Vagina (tissue), 2 donors: ENCODE measurements at regions of chr16 and their contacts with region 1.

Region 1: DNA sequence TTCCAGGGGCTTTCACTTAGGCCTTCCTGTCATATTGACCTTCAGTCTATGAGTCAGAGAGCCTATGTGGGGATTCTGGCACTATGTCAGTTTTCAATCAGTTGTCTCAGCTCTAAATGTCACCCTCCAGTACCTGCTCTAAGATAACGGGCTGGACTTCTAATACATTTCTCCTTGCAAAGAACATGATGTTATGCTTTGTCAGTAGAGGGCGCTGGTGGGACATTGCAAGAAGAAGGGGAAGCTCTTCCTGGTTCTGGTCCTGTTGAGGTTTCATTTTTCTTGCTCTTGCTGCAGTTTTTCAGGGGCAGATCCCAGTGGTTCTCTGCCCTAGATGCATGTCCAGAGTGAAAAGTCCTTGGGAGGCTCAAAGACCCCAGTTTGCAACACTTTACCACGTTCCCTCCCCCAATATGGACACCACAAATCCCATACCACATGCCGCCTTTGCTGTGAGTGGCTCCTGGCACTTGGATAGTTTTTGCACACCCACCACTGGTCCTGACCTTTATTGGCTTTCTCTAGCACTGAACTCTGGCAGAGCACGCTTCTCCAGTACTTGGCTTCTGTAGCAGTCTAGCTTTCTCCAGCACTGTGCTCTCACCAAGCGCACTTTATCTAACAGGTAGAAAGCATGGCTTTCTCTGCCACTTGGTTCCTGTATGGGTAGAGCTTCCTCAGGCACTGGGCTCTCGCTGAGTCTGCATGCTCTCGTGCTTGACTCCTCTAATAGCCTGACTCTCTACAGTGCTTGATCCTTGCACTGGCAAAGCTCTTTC is 49.0 kb downstream of the BCL7C start:
- DNase-seq: no peak
- H3K4me3 ChIP-seq: peak overlapping the region; percentile 23 to 31
- H3K27ac ChIP-seq: peak overlapping the region; percentile 69
- H3K4me1 ChIP-seq: peaks cover 11% of the 10 kb centered on the region
- H3K27me3 ChIP-seq: no peaks in the 10 kb centered on the region
- CTCF ChIP-seq: peak; percentile 63 to 88 (median 70)
- POLR2A ChIP-seq: no peak

Region 2: DNA sequence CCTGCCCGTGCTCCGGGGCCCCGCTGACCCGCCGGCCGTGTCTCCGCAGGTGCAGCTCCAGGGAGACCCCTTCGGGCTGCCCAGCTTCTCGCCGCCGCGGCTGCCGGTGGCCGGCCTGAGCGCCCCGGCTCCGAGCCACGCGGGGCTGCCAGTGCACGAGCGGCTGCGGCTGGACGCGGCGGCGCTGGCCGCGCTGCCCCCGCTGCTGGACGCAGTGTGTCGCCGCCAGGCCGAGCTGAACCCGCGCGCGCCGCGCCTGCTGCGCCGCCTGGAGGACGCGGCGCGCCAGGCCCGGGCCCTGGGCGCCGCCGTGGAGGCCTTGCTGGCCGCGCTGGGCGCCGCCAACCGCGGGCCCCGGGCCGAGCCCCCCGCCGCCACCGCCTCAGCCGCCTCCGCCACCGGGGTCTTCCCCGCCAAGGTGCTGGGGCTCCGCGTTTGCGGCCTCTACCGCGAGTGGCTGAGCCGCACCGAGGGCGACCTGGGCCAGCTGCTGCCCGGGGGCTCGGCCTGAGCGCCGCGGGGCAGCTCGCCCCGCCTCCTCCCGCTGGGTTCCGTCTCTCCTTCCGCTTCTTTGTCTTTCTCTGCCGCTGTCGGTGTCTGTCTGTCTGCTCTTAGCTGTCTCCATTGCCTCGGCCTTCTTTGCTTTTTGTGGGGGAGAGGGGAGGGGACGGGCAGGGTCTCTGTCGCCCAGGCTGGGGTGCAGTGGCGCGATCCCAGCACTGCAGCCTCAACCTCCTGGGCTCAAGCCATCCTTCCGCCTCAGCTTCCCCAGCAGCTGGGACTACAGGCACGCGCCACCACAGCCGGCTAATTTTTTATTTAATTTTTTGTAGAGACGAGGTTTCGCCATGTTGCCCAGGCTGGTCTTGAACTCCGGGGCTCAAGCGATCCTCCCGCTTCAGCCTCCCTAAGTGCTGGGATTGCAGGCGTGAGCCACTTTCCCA is 57.4 kb after region 1 on chr16:
- intact Hi-C with region 1: loop called (anchors 5 kb)
- DNase-seq: no peak
- H3K4me3 ChIP-seq: peak overlapping the region; percentile 54 to 55
- H3K27ac ChIP-seq: peak overlapping the region; percentile 91
- H3K4me1 ChIP-seq: peaks cover 34% of the 10 kb centered on the region
- H3K27me3 ChIP-seq: no peaks in the 10 kb centered on the region
- CTCF ChIP-seq: no peak
- POLR2A ChIP-seq: no peak

Region 3: DNA sequence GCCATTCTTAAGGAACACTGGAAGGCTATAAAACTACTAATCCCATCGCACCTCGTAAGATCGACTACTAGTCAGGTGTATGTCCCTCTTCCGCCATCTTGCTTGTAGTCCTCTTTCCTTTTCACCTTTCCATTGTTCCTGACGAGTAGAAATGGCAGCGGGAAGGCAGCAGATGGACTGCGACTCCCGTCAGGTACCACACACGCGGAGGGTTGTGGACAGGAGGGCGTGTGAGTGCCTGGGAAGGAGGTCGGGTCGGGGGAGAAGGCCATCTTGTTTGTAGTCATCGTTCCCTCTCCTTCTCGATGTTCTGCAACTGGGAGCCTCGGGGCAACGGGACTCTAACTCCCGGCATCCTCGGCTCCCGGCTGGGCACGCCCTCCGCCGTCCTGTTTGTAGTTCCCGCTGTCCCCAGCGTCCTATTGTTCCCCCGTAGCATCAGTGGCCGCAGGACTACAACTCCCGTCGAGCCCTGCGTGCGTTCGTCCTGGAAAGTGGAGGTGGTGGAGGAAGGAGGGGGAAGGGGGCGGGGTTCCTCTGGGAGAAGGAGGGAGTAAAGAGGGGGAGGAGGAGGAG is 78.2 kb after region 1 on chr16:
- intact Hi-C with region 1: loop called (anchors 5 kb)
- DNase-seq: peak; percentile 100
- H3K4me3 ChIP-seq: peak overlapping the region; percentile 82 to 92
- H3K27ac ChIP-seq: peak overlapping the region; percentile 98
- H3K4me1 ChIP-seq: peaks cover 38% of the 10 kb centered on the region
- H3K27me3 ChIP-seq: no peaks in the 10 kb centered on the region
- CTCF ChIP-seq: no peak
- POLR2A ChIP-seq: no peak

Region 4: GRCh38 chr16:31010585-31011325 is 165.9 kb after region 1 on chr16 and contains the start of gene STX1B:
- intact Hi-C with region 1: no loop called
- DNase-seq: no peak
- H3K4me3 ChIP-seq: peak within 1 kb of the TSS in 1 of 2 donors; percentile 44
- H3K27ac ChIP-seq: no peak within 1 kb of the TSS
- H3K4me1 ChIP-seq: peaks cover 5% of the 10 kb centered on the region
- H3K27me3 ChIP-seq: no peaks in the 10 kb centered on the region
- CTCF ChIP-seq: no peak
- POLR2A ChIP-seq: no peak
- total RNA-seq, gene STX1B: 4.7 TPM

Region 5: GRCh38 chr16:31090540-31090939 is 245.7 kb after region 1 on chr16:
- intact Hi-C with region 1: no loop called
- DNase-seq: no peak
- H3K4me3 ChIP-seq: no peak overlapping the region
- H3K27ac ChIP-seq: no peak overlapping the region
- H3K4me1 ChIP-seq: peaks cover 17% of the 10 kb centered on the region
- H3K27me3 ChIP-seq: no peaks in the 10 kb centered on the region
- CTCF ChIP-seq: no peak
- POLR2A ChIP-seq: no peak